Activated B cell treated with CpG ODN at 0.5 μM for 24 hours (primary cell): ENCODE measurements at regions of chr7 and their contacts with region 1.

Region 1: DNA sequence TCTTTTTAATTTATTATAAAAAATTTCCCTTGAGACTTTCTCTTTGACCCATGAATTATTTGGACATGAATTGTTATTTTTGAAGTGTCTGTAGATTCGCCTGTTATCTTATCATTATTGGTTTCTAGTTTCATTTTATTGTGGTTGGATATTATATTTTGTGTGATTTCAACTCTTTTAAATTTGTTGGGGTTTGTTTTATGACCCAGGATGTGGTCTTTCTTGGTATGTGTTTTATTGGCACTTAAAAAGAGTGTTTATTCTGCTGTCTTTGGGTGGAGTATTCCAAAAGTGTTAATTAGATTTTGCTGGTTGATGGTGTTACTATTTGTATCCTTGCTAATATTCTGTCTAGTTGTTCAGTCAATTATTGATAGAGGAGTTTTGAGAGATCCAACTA is 50.5 kb upstream of the GPR141 start:
- DNase-seq: no peak
- ATAC-seq: no peak
- H3K4me3 Mint-ChIP-seq: no peak overlapping the region
- H3K27ac Mint-ChIP-seq: no peak overlapping the region
- H3K4me1 Mint-ChIP-seq: no peaks in the 10 kb centered on the region
- H3K27me3 Mint-ChIP-seq: peaks cover 29% of the 10 kb centered on the region
- CTCF ChIP-seq: no peak

Region 2: DNA sequence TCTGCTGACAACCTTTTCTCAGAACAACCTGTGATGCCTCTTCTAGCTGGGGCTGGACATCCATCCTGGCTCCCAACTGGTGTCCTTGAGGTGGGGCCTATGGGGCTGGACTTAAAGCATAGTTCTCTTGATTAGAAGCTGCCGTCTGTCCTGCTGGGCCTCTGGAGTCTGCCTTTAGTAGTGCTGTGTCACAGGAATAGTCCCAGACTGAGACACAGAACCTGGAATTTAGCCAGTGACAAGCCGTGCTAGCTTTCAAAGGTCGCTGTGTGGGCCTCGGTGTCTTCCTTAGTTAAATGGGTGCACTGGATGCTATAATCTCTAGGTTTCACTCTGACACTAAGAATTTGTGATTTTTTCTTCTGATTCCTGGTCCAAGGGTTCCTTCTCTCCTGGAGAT is 91.7 kb after region 1 on chr7:
- CTCF ChIA-PET with region 1: no interaction called
- POLR2A ChIA-PET with region 1: no interaction called
- intact Hi-C with region 1: loop called (anchors 5 kb)
- DNase-seq: no peak
- ATAC-seq: no peak
- H3K4me3 Mint-ChIP-seq: no peak overlapping the region
- H3K27ac Mint-ChIP-seq: no peak overlapping the region
- H3K4me1 Mint-ChIP-seq: no peaks in the 10 kb centered on the region
- H3K27me3 Mint-ChIP-seq: no peaks in the 10 kb centered on the region
- CTCF ChIP-seq: no peak